ENCODE measurements at regions of chr19 and their contacts with region 1.

Region 1: DNA sequence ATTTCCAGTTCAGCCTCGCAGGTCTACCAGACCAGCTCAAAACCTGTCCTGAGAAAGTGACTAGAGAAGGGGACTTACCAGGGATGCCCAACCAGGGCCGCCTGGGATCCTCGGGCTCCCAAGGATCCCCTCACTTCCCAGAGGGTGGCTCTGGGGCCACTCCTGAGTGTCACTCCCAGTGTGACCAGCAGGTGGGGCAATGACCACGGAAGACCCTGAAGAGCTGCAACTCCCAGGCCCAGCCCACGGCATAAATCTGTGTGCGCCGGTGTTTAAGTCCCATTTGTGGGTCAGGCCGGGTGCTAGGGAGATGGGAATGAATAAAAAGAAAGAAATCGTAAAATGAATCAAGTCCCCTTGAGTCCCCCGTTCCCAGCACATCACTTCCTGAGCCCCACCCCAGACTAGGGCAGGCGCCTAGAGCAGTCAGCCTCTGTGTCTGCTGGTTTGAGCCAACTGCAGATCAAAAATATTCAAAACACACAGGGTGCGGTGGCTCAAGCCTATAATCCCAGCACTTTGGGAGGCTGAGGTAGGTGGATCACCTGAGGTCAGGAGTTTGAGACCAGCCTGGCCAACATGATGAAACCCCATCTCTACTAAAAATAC is 10.7 kb downstream of the PTGIR start:
- DNase-seq: peak; percentile 87
- ATAC-seq: peak; percentile 73
- H3K4me3 Mint-ChIP-seq: no peak overlapping the region
- H3K27ac Mint-ChIP-seq: peak overlapping the region; percentile 22
- H3K4me1 Mint-ChIP-seq: peaks cover 63% of the 10 kb centered on the region
- H3K27me3 Mint-ChIP-seq: no peaks in the 10 kb centered on the region

Region 2: GRCh38 chr19:46529622-46530462 is 84.4 kb before region 1 on chr19:
- CTCF ChIA-PET with region 1: interaction called, 12 read pairs
- DNase-seq: peak; percentile 73
- ATAC-seq: peak; percentile 73
- H3K4me3 Mint-ChIP-seq: no peak overlapping the region
- H3K27ac Mint-ChIP-seq: no peak overlapping the region
- H3K4me1 Mint-ChIP-seq: peaks cover 11% of the 10 kb centered on the region
- H3K27me3 Mint-ChIP-seq: peaks cover under 1% of the 10 kb centered on the region

Region 3: GRCh38 chr19:46555628-46556280 is 58.5 kb before region 1 on chr19:
- CTCF ChIA-PET with region 1: no interaction called
- DNase-seq: no peak
- ATAC-seq: no peak
- H3K4me3 Mint-ChIP-seq: no peak overlapping the region
- H3K27ac Mint-ChIP-seq: no peak overlapping the region
- H3K4me1 Mint-ChIP-seq: no peaks in the 10 kb centered on the region
- H3K27me3 Mint-ChIP-seq: peaks cover 36% of the 10 kb centered on the region

Region 4: GRCh38 chr19:46586303-46587001 is 27.8 kb before region 1 on chr19:
- CTCF ChIA-PET with region 1: no interaction called
- DNase-seq: no peak
- ATAC-seq: no peak
- H3K4me3 Mint-ChIP-seq: no peak overlapping the region
- H3K27ac Mint-ChIP-seq: no peak overlapping the region
- H3K4me1 Mint-ChIP-seq: peaks cover 2% of the 10 kb centered on the region
- H3K27me3 Mint-ChIP-seq: peaks cover 17% of the 10 kb centered on the region

Region 5: GRCh38 chr19:46600384-46601317 is 13.6 kb before region 1 on chr19:
- CTCF ChIA-PET with region 1: interaction called, 93 read pairs
- DNase-seq: peak; percentile 97
- ATAC-seq: peak; percentile 88
- H3K4me3 Mint-ChIP-seq: peak overlapping the region; percentile 98
- H3K27ac Mint-ChIP-seq: peak overlapping the region; percentile 100
- H3K4me1 Mint-ChIP-seq: peaks cover 32% of the 10 kb centered on the region
- H3K27me3 Mint-ChIP-seq: peaks cover 8% of the 10 kb centered on the region

Region 6: DNA sequence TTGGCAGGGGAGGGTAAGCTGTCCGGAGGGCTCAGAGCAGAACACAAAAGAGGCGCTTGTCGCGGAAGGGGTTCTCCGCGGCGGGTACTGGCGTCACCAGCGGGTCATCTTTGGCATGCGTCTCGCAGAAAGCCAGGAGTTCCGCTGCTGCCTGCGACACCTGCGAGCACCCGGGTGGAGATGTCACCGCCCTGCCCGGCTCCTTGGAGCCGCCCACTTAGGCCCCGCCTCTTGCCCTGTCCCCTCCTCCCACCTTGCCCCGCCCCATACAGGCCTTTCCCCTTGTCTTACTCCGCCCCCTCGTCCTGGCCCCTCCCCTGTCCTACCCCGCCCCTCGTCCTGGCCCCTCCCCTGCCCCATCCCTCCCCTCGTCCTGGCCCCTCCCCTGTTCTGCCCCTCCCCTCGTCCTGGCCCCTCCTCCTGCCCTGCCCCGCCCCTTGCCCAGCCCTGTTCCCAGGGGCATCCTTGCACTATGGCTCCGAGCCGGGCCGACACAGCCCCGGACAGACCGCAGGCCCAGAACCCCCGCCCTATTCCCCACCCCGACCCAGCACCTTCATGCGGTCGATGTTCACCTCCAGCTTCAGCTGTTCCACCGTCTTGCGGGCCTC is 19.9 kb after region 1 on chr19:
- CTCF ChIA-PET with region 1: interaction called, 143 read pairs
- DNase-seq: peak; percentile 96
- ATAC-seq: peak; percentile 73
- H3K4me3 Mint-ChIP-seq: peak overlapping the region; percentile 47
- H3K27ac Mint-ChIP-seq: no peak overlapping the region
- H3K4me1 Mint-ChIP-seq: peaks cover 17% of the 10 kb centered on the region
- H3K27me3 Mint-ChIP-seq: peaks cover 31% of the 10 kb centered on the region

Region 7: DNA sequence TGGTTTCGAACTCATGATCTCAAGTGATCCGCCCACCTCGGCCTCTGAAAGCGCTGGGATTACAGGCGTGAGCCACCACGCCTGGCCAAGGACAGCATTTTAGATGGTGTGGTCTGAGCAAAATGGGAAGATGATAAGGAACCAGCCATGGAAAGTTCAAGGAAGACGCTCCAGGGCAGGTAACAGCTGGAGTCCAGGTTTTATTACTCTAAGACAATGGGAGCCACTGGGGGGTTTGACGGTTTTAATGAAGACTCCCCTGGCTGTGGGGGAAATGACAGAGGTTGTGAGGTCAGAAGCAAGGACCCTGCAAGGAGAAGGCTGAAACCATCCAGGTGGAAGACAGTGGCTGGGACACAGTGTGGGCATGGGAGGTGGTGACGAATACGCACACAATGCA is 81.8 kb after region 1 on chr19:
- CTCF ChIA-PET with region 1: no interaction called
- DNase-seq: no peak
- ATAC-seq: no peak
- H3K4me3 Mint-ChIP-seq: no peak overlapping the region
- H3K27ac Mint-ChIP-seq: no peak overlapping the region
- H3K4me1 Mint-ChIP-seq: no peaks in the 10 kb centered on the region
- H3K27me3 Mint-ChIP-seq: no peaks in the 10 kb centered on the region

Measured in activated CD8-positive, alpha-beta memory T cell treated with anti-CD3 and anti-CD28 coated beads, Interleukin-2, amount 10 ng/mL, durations not matched to agents 7 days and 5 days (primary cell).